ENCODE measurements at regions of chr3 and their contacts with region 1.

Region 1: DNA sequence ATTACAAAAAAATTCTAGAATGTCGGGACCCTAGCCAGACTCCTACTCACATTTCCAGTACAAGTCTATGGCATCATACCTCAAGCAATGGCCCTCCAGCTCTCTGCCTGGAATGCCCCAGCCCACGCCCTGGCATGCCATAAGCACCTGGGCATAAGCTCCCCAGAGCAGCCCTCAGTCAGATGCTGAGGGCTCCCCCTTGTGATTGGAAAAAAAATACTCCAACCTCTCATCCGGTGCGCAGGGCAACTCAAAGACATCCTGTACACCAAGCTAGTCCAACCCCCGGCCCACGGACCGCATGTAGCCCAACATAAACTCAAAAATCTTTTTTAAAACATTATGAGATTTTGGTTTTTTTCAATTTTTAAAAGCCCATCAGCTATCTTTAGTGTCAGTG is 115.4 kb downstream of the NEK10 start:
- DNase-seq: peak; percentile 46
- H3K4me3 ChIP-seq: no peak overlapping the region
- H3K27ac ChIP-seq: no peak overlapping the region
- H3K4me1 ChIP-seq: no peaks in the 10 kb centered on the region
- H3K27me3 ChIP-seq: no peaks in the 10 kb centered on the region
- CTCF ChIP-seq: peak; percentile 36 to 58
- POLR2A ChIP-seq: no peak

Region 2: DNA sequence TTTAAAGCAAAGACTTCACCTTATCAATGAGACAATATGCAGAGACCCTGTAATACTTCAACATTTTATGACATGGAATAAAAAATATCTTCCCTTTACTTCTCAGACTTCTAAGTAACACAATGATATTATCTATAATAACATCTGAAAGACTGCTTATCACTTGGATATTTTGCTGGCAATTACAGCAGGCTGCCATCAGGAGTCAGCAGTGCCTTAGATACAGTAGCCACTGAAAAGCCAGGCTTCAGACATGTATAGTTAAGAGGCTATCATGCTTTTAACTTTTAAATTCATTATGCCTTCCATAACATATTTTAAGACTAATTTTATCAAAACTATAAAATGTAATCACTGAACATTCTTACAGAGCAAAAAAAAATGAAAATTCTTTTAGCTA is 112.2 kb before region 1 on chr3:
- CTCF ChIA-PET with region 1: interaction called, 33 read pairs
- POLR2A ChIA-PET with region 1: no interaction called
- dilution Hi-C with region 1: no loop called
- intact Hi-C with region 1: no loop called
- DNase-seq: no peak
- H3K4me3 ChIP-seq: no peak overlapping the region
- H3K27ac ChIP-seq: no peak overlapping the region
- H3K4me1 ChIP-seq: peaks cover 8% of the 10 kb centered on the region
- H3K27me3 ChIP-seq: no peaks in the 10 kb centered on the region
- CTCF ChIP-seq: no peak
- POLR2A ChIP-seq: no peak

Region 3: DNA sequence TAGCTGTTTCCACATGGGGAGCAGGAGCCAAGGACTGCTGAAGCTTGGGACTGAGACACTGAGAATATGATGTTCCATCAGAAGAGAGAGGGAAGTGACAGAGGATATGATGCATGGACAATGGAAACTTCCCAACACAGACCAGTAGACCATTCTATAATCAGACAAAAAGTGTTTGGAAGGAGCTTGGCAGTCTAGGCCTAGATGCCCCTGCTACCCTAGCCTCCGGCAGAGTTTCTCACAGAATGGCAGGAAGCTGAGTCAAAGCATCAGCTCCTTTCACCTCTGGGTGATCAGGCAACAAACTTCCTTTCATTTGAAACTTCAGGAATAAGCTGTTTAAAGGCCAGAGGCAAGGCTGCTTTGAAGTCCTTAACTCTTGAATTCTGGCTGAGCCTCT is 106.6 kb before region 1 on chr3:
- CTCF ChIA-PET with region 1: interaction called, 31 read pairs
- POLR2A ChIA-PET with region 1: no interaction called
- dilution Hi-C with region 1: no loop called
- intact Hi-C with region 1: no loop called
- DNase-seq: peak; percentile 84
- H3K4me3 ChIP-seq: no peak overlapping the region
- H3K27ac ChIP-seq: peak overlapping the region; percentile 96
- H3K4me1 ChIP-seq: peaks cover 26% of the 10 kb centered on the region
- H3K27me3 ChIP-seq: no peaks in the 10 kb centered on the region
- CTCF ChIP-seq: no peak
- POLR2A ChIP-seq: no peak

Measured in endothelial cell of umbilical vein (primary cell).